IMR-90 (cell line): ENCODE measurements at regions of chr2 and their contacts with region 1.

Region 1: GRCh38 chr2:186274936-186275575 is 211.0 kb upstream of the ZC3H15 start:
- DNase-seq: peak; percentile 88
- ATAC-seq: peak; percentile 87
- H3K4me3 ChIP-seq: no peak overlapping the region
- H3K27ac ChIP-seq: no peak overlapping the region
- H3K4me1 ChIP-seq: peaks cover 1% of the 10 kb centered on the region; the same call in 1 of the 2 replicates
- H3K27me3 ChIP-seq: no peaks in the 10 kb centered on the region
- CTCF ChIP-seq: no peak
- POLR2A ChIP-seq: no peak
- RAD21 ChIP-seq: no peak

Region 2: DNA sequence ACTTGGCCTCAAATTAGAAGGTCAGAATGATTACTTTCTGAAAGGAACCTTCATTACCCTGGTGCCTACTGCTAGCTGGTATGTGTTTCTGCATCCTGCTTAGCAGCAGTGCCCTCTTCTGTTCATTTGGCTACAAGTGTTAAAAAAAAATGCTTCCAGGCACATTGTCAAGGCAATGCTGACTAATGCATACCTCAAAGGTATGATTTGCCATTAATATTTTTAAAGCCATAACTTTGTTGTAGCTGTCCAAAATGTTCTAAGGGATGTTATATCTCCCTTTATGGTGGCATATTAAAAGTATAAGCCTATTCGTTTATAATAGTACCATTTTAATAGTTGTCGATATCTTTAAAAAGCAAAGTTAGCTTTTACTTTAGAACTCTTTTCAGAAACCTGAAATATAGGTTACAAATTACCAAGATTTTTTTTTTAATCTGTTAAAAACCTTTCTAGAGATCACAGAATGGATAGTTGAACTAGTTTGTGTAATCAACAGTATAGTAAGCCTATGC is 366.8 kb after region 1 on chr2:
- CTCF ChIA-PET with region 1: no interaction called
- POLR2A ChIA-PET with region 1: no interaction called
- dilution Hi-C with region 1: no loop called
- in situ Hi-C with region 1: no loop called
- intact Hi-C with region 1: loop called (anchors 10 kb)
- DNase-seq: peak; percentile 78
- ATAC-seq: peak; percentile 87
- H3K4me3 ChIP-seq: no peak overlapping the region
- H3K27ac ChIP-seq: no peak overlapping the region
- H3K4me1 ChIP-seq: peaks cover 14% of the 10 kb centered on the region
- H3K27me3 ChIP-seq: no peaks in the 10 kb centered on the region
- CTCF ChIP-seq: peak; percentile 86
- POLR2A ChIP-seq: no peak
- RAD21 ChIP-seq: peak; percentile 95